ENCODE measurements at regions of chr15 and their contacts with region 1.

Region 1: DNA sequence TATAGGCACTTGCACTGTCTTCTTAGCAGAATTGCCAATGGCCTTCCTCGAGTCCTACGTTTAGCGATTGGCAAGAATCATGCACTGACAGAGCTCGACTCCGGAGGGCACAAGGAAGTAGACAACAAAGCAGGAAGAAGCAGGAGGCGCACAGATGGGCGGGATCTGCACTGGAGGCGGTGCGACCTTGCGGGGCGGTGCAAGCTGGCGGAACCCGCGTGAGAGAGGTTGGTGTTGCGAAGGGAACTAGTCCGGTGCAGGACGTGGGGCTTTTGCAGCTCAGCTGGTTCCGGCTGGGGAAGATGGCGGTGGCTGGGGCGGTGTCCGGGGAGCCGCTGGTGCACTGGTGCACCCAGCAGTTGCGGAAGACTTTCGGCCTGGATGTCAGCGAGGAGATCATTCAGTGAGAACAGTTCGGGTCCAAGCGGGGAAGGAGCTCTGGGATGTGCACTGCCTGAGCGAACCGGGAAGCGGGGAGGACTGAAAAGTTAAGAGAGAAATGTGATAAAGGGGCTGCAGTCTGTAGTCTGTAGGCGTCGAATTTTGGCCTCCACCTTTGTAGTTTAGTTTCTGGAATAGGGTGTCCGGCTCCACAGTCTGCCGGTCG is at the start of gene TRIP4:
- H3K4me3 Mint-ChIP-seq: peak within 1 kb of the TSS; percentile 92
- H3K27ac Mint-ChIP-seq: peak within 1 kb of the TSS; percentile 91
- H3K4me1 Mint-ChIP-seq: peaks cover 12% of the 10 kb centered on the region
- H3K27me3 Mint-ChIP-seq: no peaks in the 10 kb centered on the region

Region 2: DNA sequence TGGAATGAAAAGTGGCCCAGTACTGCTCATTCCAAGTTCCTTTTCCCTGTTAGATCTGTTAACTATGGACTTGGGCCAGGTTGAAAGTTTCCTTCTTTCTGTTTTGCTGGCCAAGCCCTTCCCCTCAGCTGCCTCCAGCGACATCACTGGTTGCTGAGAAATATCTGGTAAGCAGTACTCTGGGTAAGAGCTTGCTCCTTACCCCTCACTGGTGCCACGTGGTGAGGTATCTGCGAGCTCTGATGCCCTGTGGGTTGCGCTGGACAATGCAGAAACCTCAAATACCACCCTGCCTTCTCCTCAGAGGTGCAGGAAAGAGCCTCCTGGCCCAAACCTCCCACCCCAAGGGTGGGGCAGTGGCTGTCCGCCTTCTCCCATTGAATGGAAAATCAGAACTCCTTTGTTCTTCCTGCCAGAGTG is 1153.2 kb before region 1 on chr15:
- intact Hi-C with region 1: no loop called
- H3K4me3 Mint-ChIP-seq: peak overlapping the region; percentile 13
- H3K27ac Mint-ChIP-seq: peak overlapping the region; percentile 76
- H3K4me1 Mint-ChIP-seq: peaks cover 42% of the 10 kb centered on the region
- H3K27me3 Mint-ChIP-seq: no peaks in the 10 kb centered on the region

Region 3: GRCh38 chr15:64162870-64163658 is 224.6 kb before region 1 on chr15 and contains the start of gene PPIB:
- intact Hi-C with region 1: loop called (anchors 5 kb)
- H3K4me3 Mint-ChIP-seq: peak within 1 kb of the TSS; percentile 94
- H3K27ac Mint-ChIP-seq: peak within 1 kb of the TSS; percentile 97
- H3K4me1 Mint-ChIP-seq: peaks cover 53% of the 10 kb centered on the region
- H3K27me3 Mint-ChIP-seq: no peaks in the 10 kb centered on the region

Region 4: GRCh38 chr15:64355944-64356709 is 31.5 kb before region 1 on chr15 and contains the start of gene CSNK1G1:
- intact Hi-C with region 1: loop called (anchors 1 kb)
- H3K4me3 Mint-ChIP-seq: peak within 1 kb of the TSS; percentile 98
- H3K27ac Mint-ChIP-seq: peak within 1 kb of the TSS; percentile 94
- H3K4me1 Mint-ChIP-seq: peaks cover 28% of the 10 kb centered on the region
- H3K27me3 Mint-ChIP-seq: no peaks in the 10 kb centered on the region

Region 5: DNA sequence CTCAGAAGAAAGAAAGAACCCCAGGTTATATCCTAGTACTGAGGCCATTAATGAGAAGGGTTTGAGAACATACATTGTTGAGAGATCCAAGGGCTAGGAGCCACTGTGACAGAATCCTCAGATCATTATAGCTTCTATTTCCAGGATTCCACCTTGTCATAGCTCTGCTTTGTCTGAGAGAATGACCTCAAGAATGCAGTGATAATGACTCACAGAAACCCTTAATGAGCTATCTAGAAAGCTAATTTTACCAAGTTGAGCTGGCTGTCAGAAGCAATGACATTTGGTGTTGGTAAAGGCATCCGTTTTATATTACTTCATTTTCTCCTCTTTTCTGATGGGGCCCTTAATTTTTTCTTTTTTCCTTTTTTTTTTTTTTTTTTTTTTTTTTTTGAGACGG is 10.9 kb after region 1 on chr15:
- intact Hi-C with region 1: no loop called
- H3K4me3 Mint-ChIP-seq: no peak overlapping the region
- H3K27ac Mint-ChIP-seq: no peak overlapping the region
- H3K4me1 Mint-ChIP-seq: no peaks in the 10 kb centered on the region
- H3K27me3 Mint-ChIP-seq: no peaks in the 10 kb centered on the region

Measured in dendritic cell treated with granulocyte-macrophage colony-stimulating factor and Interleukin-4, amounts not matched to agents 40 ng/mL and 50 ng/mL, for 4 days (primary cell).